ENCODE measurements at regions of chr3 and their contacts with region 1.

Region 1: GRCh38 chr3:27712136-27713077 is 9.7 kb downstream of the EOMES start:
- DNase-seq: peak in 1 of 2 experiments; percentile 72
- H3K4me3 ChIP-seq: peak overlapping the region; percentile 10 to 57 (median 35); a peak in 7 of 8 replicates
- H3K27ac ChIP-seq: no peak overlapping the region
- H3K4me1 ChIP-seq: peaks cover 5 to 19% (median 18%) of the 10 kb centered on the region in 4 experiments
- H3K27me3 ChIP-seq: peaks cover 50 to 62% (median 56%) of the 10 kb centered on the region in 4 experiments
- CTCF ChIP-seq: peak; percentile 71 to 78 (median 78)
- EP300 ChIP-seq: no peak
- POLR2A ChIP-seq: no peak
- RAD21 ChIP-seq: peak; percentile 89 to 90

Region 2: GRCh38 chr3:27686642-27687041 is 25.8 kb before region 1 on chr3:
- CTCF ChIA-PET with region 1: interaction called, 16 read pairs
- POLR2A ChIA-PET with region 1: no interaction called
- DNase-seq: no peak
- H3K4me3 ChIP-seq: no peak overlapping the region
- H3K27ac ChIP-seq: no peak overlapping the region
- H3K4me1 ChIP-seq: peaks cover 0 to 3% (median 0%) of the 10 kb centered on the region in 4 experiments; a peak in 1 of 7 replicates
- H3K27me3 ChIP-seq: no peaks in the 10 kb centered on the region
- CTCF ChIP-seq: no peak
- EP300 ChIP-seq: no peak
- POLR2A ChIP-seq: no peak
- RAD21 ChIP-seq: no peak

Region 3: DNA sequence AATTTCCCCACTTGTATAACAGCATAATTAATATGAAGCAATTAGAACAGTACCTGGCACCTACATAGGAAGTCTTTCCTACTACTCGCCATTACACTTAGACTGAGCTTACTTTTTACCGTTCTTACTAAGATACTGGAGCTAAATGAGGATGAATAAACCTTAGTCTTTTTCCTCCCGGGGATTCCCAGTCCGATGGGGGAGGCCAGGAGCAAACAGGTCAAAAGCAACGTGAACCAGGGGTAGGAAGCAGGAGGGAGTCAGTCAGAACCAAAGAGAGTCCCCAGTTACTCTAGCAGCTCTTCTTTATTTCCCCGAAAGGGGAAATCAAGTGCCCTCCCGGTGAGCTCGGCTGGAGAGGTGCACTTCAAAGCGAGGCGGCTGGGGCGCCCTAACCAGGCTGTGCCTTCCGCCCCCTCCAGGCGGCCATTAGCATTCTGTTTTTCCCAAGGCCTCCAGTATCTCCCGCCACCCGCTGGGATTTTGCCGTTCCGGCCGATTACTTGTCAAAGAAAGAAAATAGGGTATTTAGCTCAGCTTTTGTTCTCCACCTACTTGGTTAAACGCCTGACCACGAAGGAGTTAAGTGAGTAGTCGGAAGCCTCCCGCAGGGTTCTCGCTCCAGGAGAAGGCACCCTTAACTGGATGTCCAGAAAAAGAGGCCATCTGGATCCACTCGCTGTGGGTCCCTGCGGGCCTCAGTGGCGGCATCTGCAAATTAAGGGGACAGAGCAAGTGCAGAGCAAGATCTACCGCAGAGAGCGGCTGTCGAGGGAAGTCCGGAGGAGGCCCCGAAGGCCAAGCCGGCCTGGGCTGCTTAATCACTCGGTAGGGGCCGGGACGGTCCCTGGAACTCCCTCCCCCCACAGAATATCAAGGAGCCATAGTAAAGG is 16.0 kb after region 1 on chr3:
- CTCF ChIA-PET with region 1: interaction called, 70 read pairs
- POLR2A ChIA-PET with region 1: interaction called, 11 read pairs
- DNase-seq: peak in 1 of 2 experiments; percentile 88
- H3K4me3 ChIP-seq: peak overlapping the region in 2 of 4 experiments; percentile 17 to 53; a peak in 3 of 8 replicates
- H3K27ac ChIP-seq: no peak overlapping the region
- H3K4me1 ChIP-seq: peaks cover 9 to 31% (median 23%) of the 10 kb centered on the region in 4 experiments
- H3K27me3 ChIP-seq: peaks cover 74 to 99% (median 88%) of the 10 kb centered on the region in 4 experiments
- CTCF ChIP-seq: peak in 2 of 3 experiments; percentile 16 to 25; a peak in 2 of 4 replicates
- EP300 ChIP-seq: peak in 1 of 2 experiments; percentile 33; a peak in 1 of 3 replicates
- POLR2A ChIP-seq: no peak
- RAD21 ChIP-seq: no peak; a peak in 2 of 4 replicates

Region 4: GRCh38 chr3:28308196-28308595 is 595.8 kb after region 1 on chr3:
- CTCF ChIA-PET with region 1: interaction called, 10 read pairs
- POLR2A ChIA-PET with region 1: no interaction called
- DNase-seq: no peak
- H3K4me3 ChIP-seq: no peak overlapping the region
- H3K27ac ChIP-seq: no peak overlapping the region
- H3K4me1 ChIP-seq: no peaks in the 10 kb centered on the region
- H3K27me3 ChIP-seq: no peaks in the 10 kb centered on the region
- CTCF ChIP-seq: no peak
- EP300 ChIP-seq: no peak
- POLR2A ChIP-seq: no peak
- RAD21 ChIP-seq: no peak

Region 5: DNA sequence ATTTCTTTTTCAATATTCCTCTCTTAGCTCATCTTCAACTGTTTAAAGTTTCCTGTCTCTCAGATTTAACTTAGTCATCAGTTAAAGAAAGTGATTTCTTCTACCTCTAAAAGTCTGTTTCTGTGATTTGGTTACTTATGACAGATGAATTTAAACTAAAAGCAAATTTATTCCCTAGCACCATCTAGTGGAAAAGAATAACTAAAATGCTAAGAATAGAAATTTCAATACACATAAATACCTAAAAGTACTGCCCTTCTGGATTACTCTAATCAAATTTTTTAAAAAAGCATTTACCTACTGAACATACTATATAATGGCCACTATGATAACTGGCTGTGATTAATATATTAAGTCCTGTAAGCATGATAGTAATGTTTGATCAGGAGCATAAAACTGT is 622.1 kb after region 1 on chr3:
- CTCF ChIA-PET with region 1: interaction called, 10 read pairs
- POLR2A ChIA-PET with region 1: no interaction called
- DNase-seq: no peak
- H3K4me3 ChIP-seq: no peak overlapping the region
- H3K27ac ChIP-seq: no peak overlapping the region
- H3K4me1 ChIP-seq: no peaks in the 10 kb centered on the region
- H3K27me3 ChIP-seq: no peaks in the 10 kb centered on the region
- CTCF ChIP-seq: no peak
- EP300 ChIP-seq: no peak
- POLR2A ChIP-seq: no peak
- RAD21 ChIP-seq: no peak